ENCODE measurements at regions of chr13 and their contacts with region 1.

Region 1: DNA sequence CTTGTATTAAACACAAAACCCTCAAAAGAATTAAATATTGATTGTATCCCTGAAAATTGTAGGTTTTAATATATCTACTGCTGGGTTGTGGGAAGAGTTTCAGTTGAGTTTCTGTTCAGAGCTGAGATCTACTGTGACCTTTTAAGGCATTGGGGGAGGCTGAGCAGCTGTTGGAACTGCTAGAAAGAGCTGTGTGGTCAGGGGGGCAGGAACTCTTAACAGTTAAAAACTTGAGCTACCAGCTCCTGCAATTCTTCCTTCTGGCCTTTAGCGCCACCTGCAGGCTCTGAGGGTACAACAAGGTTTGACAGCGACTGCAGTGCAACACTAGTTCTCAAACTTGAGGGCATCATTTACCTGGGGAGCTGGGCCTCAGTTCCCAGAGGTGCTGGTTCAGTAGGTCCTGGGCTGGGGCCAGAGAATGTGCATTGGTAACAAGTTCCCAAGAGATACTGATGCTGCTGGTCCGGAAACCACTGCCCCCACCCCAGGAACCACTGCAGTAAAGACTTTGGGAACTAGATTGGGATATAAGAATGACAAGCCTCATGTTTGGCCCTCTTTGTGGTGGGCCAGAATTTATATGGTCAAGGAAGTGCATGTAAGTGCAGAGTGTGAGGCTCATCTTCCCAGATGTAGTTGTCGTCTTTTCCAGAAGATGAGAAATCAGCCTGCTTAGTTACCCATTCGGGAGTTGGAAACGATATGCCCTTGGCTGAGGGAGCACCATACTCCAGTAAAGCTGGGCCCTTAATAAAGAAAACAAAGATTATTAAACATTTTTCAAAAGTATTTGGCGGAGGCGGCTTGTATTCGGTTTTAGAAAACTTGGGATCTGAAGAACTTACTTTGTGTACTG is 2.6 kb downstream of the RNASEH2B start:
- DNase-seq: peak; percentile 84 to 90 (median 86)
- ATAC-seq: peak; percentile 45 to 60 (median 52)
- H3K4me3 ChIP-seq: peak overlapping the region in 1 of 12 donors; percentile 70
- H3K27ac ChIP-seq: peak overlapping the region in 8 of 12 donors; percentile 1 to 93 (median 66)
- H3K4me1 ChIP-seq: peaks cover 0 to 70% (median 46%) of the 10 kb centered on the region in 12 donors
- H3K27me3 ChIP-seq: no peaks in the 10 kb centered on the region
- CTCF ChIP-seq: peak; percentile 77 to 91 (median 86)
- POLR2A ChIP-seq: no peak

Region 2: GRCh38 chr13:49976314-49977258 is 935.6 kb before region 1 on chr13:
- intact Hi-C with region 1: loop called (anchors 2 to 10 kb)
- DNase-seq: peak; percentile 50 to 79 (median 66)
- ATAC-seq: peak in 3 of 4 donors; percentile 80 to 85 (median 81)
- H3K4me3 ChIP-seq: no peak overlapping the region
- H3K27ac ChIP-seq: no peak overlapping the region
- H3K4me1 ChIP-seq: peaks cover 0 to 5% (median 0%) of the 10 kb centered on the region in 12 donors
- H3K27me3 ChIP-seq: no peaks in the 10 kb centered on the region
- CTCF ChIP-seq: peak; percentile 59 to 92 (median 89)
- POLR2A ChIP-seq: no peak

Region 3: GRCh38 chr13:50081679-50082425 is 830.3 kb before region 1 on chr13:
- intact Hi-C with region 1: loop called in 6 of 10 experiments (anchors 5 to 10 kb)
- DNase-seq: peak; percentile 97 to 98 (median 98)
- ATAC-seq: peak; percentile 95 to 97 (median 96)
- H3K4me3 ChIP-seq: peak overlapping the region; percentile 41 to 80 (median 69)
- H3K27ac ChIP-seq: peak overlapping the region in 11 of 12 donors; percentile 67 to 88 (median 78)
- H3K4me1 ChIP-seq: peaks cover 0 to 64% (median 26%) of the 10 kb centered on the region in 12 donors
- H3K27me3 ChIP-seq: no peaks in the 10 kb centered on the region
- CTCF ChIP-seq: peak in 2 of 12 donors; percentile 14 to 21
- POLR2A ChIP-seq: no peak

Region 4: DNA sequence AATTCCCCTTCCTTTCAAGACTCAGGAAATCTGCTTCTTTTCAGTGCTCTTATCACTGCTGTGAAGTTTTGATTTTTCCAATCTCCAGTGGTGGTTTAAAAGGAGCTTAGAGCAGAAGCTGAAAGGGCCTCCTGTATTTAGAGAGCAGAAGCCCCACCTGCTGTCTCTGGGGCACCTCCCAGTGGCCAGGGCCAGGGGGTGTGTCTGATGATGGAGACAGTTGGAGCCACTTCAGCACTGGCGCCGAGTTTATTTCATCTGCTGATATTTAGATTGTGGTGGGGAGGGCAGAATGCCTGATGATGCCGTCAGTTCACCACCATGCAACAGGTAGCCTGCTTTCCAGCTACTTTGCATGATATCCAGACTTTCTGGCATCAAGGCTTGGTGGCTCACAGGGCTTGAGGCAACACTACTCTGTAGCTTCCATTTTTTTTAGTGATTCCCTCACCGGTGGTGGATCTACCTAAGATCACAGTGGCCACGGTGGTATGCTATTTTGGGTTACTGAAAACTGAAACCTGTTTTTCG is 525.0 kb before region 1 on chr13:
- intact Hi-C with region 1: loop called in 2 of 10 experiments (anchors 5 to 10 kb)
- DNase-seq: peak; percentile 61 to 77 (median 68)
- ATAC-seq: peak; percentile 89 to 96 (median 95)
- H3K4me3 ChIP-seq: peak overlapping the region in 10 of 12 donors; percentile 10 to 50 (median 37)
- H3K27ac ChIP-seq: peak overlapping the region in 11 of 12 donors; percentile 33 to 86 (median 69)
- H3K4me1 ChIP-seq: peaks cover 0 to 20% (median 2%) of the 10 kb centered on the region in 12 donors
- H3K27me3 ChIP-seq: no peaks in the 10 kb centered on the region
- CTCF ChIP-seq: peak in 11 of 12 donors; percentile 8 to 53 (median 23)
- POLR2A ChIP-seq: no peak

Region 5: GRCh38 chr13:50626101-50626547 is 286.0 kb before region 1 on chr13:
- intact Hi-C with region 1: no loop called
- DNase-seq: no peak
- ATAC-seq: peak in 1 of 4 donors; percentile 32
- H3K4me3 ChIP-seq: no peak overlapping the region
- H3K27ac ChIP-seq: peak overlapping the region in 1 of 12 donors; percentile 50
- H3K4me1 ChIP-seq: peaks cover 0 to 19% (median 0%) of the 10 kb centered on the region in 12 donors
- H3K27me3 ChIP-seq: no peaks in the 10 kb centered on the region
- CTCF ChIP-seq: no peak
- POLR2A ChIP-seq: no peak

Region 6: DNA sequence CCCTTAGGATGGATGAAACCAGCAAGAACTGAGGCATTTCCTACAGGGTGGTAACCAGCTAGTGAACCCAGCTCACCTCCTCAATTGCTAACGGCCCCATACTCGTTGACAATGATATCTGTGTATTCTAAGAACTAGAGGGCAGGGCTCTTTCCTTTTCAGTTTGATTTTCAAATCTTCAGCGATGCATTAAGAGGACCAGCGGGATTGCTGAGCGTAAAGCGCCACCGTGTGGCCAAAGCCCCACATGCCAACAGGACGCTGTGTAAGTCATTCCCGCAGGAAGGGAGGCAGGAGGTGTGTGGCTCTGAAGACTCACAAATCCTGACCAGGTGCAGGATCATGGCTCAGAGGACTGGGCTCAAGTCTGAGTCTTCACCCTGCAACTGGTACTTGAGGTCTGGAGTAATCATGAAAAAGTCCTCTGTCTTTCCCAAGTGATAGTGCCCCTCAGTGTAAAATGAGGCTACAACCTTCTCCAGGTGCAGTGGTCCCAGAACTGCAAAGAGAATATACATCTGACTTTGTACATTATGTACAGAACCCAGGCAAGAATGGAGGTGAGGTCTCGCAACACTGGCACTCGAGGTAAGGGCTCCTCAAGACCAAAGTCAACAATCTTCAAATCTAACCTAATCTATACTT is 158.0 kb after region 1 on chr13:
- intact Hi-C with region 1: loop called in 2 of 10 experiments (anchors 5 to 10 kb)
- DNase-seq: peak; percentile 66 to 87 (median 77)
- ATAC-seq: peak; percentile 74 to 87 (median 82)
- H3K4me3 ChIP-seq: no peak overlapping the region
- H3K27ac ChIP-seq: no peak overlapping the region
- H3K4me1 ChIP-seq: peaks cover 0 to 30% (median 8%) of the 10 kb centered on the region in 12 donors
- H3K27me3 ChIP-seq: peaks cover 0 to 1% (median 0%) of the 10 kb centered on the region in 9 donors
- CTCF ChIP-seq: peak; percentile 84 to 97 (median 93)
- POLR2A ChIP-seq: no peak